B cell (primary cell): ENCODE measurements at regions of chr2 and their contacts with region 1.

Region 1: DNA sequence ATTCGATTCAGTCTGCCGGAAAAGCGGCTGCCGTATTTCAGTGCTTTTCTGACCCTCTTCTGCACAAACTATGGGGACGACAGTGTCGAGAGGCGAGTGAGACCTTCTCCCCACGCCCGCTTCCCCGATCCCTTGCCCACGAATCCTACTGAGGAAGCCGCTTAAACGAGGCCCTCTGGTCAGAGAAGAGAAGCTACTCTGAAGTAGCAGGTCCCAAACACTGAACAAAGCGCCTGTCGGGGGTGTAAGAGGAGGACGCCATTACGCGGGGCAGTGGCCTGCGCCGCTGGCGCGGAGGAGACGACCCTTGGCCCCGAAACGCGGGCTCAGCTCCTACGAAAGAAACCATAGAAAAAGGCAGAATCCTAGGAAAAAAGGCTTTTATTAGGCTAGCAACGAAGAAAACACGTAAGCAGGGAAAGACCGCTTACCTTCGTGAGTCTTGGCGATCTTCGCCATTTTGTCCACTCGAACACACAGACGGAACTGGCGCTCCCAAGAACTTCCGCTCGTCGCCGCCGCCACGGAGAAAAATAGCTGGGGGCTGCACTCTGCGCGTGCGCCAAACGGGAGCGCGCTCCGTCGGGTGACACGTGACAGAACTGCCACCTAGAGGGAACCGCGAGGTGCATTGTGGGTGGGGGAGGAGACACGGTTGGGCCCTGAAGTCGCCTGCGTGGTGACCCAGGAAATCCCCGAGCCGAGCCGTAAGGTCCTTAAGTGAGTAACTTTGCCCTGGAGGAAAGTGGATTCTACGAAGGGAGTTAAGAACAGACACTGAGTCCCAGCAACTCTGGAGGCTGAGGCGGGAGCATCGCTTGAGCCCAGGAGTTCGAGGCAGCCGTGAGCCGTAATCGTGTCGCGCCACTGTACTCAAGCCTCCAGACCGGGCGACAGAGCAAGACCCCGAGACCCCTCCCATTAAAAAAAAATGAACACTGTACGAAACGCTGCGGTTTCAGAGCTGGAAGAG is at the start of gene SF3B1:
- DNase-seq: peak; percentile 99
- ATAC-seq: peak; percentile 96
- H3K4me3 ChIP-seq: peak within 1 kb of the TSS; percentile 95 to 100 (median 99)
- H3K4me3 Mint-ChIP-seq: peak within 1 kb of the TSS; percentile 99
- H3K27ac ChIP-seq: peak within 1 kb of the TSS; percentile 95 to 98
- H3K27ac Mint-ChIP-seq: peak within 1 kb of the TSS; percentile 100
- H3K4me1 ChIP-seq: peaks cover 41 to 45% of the 10 kb centered on the region in 2 donors
- H3K4me1 Mint-ChIP-seq: peaks cover 52% of the 10 kb centered on the region
- H3K27me3 ChIP-seq: no peaks in the 10 kb centered on the region
- H3K27me3 Mint-ChIP-seq: no peaks in the 10 kb centered on the region
- CTCF ChIP-seq: no peak
- total RNA-seq, gene SF3B1: 523 and 524 TPM in 2 replicates

Region 2: GRCh38 chr2:196639180-196640030 is 795.4 kb before region 1 on chr2 and contains the start of gene CCDC150:
- CTCF ChIA-PET with region 1: no interaction called
- POLR2A ChIA-PET with region 1: no interaction called
- intact Hi-C with region 1: loop called (anchors 5 kb)
- DNase-seq: peak; percentile 94
- ATAC-seq: peak; percentile 100
- H3K4me3 ChIP-seq: peak within 1 kb of the TSS; percentile 54 to 88 (median 68)
- H3K4me3 Mint-ChIP-seq: peak within 1 kb of the TSS; percentile 94
- H3K27ac ChIP-seq: peak within 1 kb of the TSS in 1 of 2 donors; percentile 56
- H3K27ac Mint-ChIP-seq: peak within 1 kb of the TSS; percentile 70
- H3K4me1 ChIP-seq: peaks cover 7 to 17% of the 10 kb centered on the region in 2 donors
- H3K4me1 Mint-ChIP-seq: peaks cover 21% of the 10 kb centered on the region
- H3K27me3 ChIP-seq: no peaks in the 10 kb centered on the region
- H3K27me3 Mint-ChIP-seq: peaks cover 8% of the 10 kb centered on the region
- CTCF ChIP-seq: no peak
- total RNA-seq, gene CCDC150: 4.9 and 5.0 TPM in 2 replicates

Region 3: DNA sequence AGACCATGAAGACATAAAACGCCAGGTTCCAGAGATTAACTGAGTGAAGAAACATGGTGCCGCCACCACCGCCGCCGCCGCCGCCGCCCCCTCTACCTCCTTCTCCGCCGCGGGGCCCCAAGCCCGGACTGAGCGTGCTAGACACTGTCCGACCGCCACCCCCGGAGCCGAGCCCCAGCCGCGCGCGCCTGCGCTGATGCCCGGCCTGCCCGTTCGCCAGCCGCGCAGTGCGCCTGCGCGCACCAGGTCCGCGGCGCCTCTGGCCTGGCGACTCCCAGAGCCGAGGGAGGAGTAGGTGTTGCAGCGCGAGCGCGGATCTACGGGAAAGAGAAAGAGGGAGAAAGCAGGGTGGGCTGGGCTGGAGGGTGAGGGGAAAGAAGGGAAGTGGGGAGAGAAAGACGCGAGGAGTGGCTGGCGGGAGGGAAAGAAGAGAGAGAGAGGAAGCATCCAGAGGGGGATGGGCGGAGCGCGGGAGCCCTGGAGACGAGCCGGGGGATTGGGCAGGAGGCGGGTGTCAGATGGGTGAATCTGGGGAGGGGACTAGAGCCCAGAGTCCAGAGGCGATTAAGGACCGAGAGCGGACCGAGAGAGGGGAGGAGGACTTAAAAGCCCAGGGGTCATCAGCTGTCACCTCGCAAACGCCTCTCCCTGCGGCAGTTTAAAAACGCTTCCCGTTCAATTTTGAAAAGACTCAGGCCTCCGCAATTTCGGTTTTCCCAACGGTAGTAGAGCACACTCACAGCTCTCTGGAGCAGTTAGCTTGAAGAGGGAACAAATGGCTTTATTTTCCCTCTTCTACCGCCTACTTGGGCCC is 508.1 kb before region 1 on chr2 and contains the start of gene PGAP1:
- CTCF ChIA-PET with region 1: no interaction called
- POLR2A ChIA-PET with region 1: no interaction called
- intact Hi-C with region 1: loop called (anchors 5 kb)
- DNase-seq: peak; percentile 88
- ATAC-seq: peak; percentile 91
- H3K4me3 ChIP-seq: peak within 1 kb of the TSS; percentile 76 to 89 (median 86)
- H3K4me3 Mint-ChIP-seq: peak within 1 kb of the TSS; percentile 90
- H3K27ac ChIP-seq: peak within 1 kb of the TSS; percentile 4 to 45
- H3K27ac Mint-ChIP-seq: peak within 1 kb of the TSS; percentile 73
- H3K4me1 ChIP-seq: peaks cover 10 to 14% of the 10 kb centered on the region in 2 donors
- H3K4me1 Mint-ChIP-seq: peaks cover 20% of the 10 kb centered on the region
- H3K27me3 ChIP-seq: peaks cover 0 to 8% (median 3%) of the 10 kb centered on the region in 4 experiments
- H3K27me3 Mint-ChIP-seq: peaks cover 16% of the 10 kb centered on the region
- CTCF ChIP-seq: no peak
- total RNA-seq, gene PGAP1: 21.8 and 22.9 TPM in 2 replicates

Region 4: DNA sequence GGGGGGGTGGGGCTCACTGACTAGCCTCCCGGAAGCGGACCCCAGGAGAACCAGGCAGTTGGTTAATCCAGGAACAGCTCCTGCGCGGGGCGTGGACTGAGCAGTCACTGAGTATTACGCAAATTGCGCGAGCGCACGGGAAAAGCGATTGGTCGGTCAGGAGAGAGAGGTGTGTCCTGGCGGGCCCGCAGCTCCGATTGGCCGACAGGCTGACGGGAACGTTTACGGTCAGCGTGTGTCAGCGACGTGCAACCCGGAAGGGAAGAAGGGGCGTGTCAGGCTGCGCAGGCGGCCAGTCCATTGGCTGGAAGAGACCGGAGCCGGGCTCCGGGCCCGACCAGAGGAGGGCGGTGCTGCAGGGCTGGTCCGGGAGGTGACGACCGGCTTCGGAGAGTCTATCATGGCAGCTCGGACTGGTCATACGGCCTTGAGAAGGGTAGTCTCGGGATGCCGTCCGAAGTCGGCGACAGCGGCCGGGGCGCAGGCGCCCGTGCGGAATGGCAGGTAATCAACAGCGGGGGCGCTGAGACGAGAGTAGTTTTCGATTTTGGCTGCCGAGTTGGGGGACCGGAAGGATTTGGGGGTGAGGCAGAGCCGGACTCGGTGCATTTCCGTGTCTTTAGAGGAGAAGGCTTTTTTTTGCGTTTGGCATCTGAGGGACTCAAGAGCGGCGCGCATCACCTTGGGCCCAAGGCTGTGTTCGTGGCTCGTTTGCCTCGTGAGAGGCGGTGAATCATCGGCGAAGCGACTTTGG is 18.5 kb after region 1 on chr2 and contains the start of gene COQ10B:
- CTCF ChIA-PET with region 1: interaction called, 6 read pairs
- POLR2A ChIA-PET with region 1: interaction called, 27 read pairs
- intact Hi-C with region 1: loop called (anchors 1 kb)
- DNase-seq: peak; percentile 99
- ATAC-seq: peak; percentile 90
- H3K4me3 ChIP-seq: peak within 1 kb of the TSS; percentile 82 to 99 (median 89)
- H3K4me3 Mint-ChIP-seq: peak within 1 kb of the TSS; percentile 99
- H3K27ac ChIP-seq: peak within 1 kb of the TSS; percentile 95 to 96
- H3K27ac Mint-ChIP-seq: peak within 1 kb of the TSS; percentile 99
- H3K4me1 ChIP-seq: peaks cover 17 to 19% of the 10 kb centered on the region in 2 donors
- H3K4me1 Mint-ChIP-seq: peaks cover 42% of the 10 kb centered on the region
- H3K27me3 ChIP-seq: no peaks in the 10 kb centered on the region
- H3K27me3 Mint-ChIP-seq: no peaks in the 10 kb centered on the region
- CTCF ChIP-seq: no peak
- total RNA-seq, gene COQ10B: 29.1 and 29.6 TPM in 2 replicates

Region 5: GRCh38 chr2:197499594-197500526 is 65.0 kb after region 1 on chr2 and contains the starts of genes HSPD1 and HSPE1:
- CTCF ChIA-PET with region 1: no interaction called
- POLR2A ChIA-PET with region 1: interaction called, 15 read pairs
- intact Hi-C with region 1: loop called (anchors 1 kb)
- DNase-seq: peak; percentile 100
- ATAC-seq: peak; percentile 84
- H3K4me3 ChIP-seq: peak within 1 kb of the TSS; percentile 60 to 86 (median 76)
- H3K4me3 Mint-ChIP-seq: peak within 1 kb of the TSS; percentile 98
- H3K27ac ChIP-seq: peak within 1 kb of the TSS; percentile 85 to 90
- H3K27ac Mint-ChIP-seq: peak within 1 kb of the TSS; percentile 94
- H3K4me1 ChIP-seq: peaks cover 37 to 38% of the 10 kb centered on the region in 2 donors
- H3K4me1 Mint-ChIP-seq: peaks cover 53% of the 10 kb centered on the region
- H3K27me3 ChIP-seq: no peaks in the 10 kb centered on the region
- H3K27me3 Mint-ChIP-seq: no peaks in the 10 kb centered on the region
- CTCF ChIP-seq: no peak
- total RNA-seq, gene HSPD1: 112 and 120 TPM in 2 replicates
- total RNA-seq, gene HSPE1: 37.9 and 46.2 TPM in 2 replicates

Region 6: DNA sequence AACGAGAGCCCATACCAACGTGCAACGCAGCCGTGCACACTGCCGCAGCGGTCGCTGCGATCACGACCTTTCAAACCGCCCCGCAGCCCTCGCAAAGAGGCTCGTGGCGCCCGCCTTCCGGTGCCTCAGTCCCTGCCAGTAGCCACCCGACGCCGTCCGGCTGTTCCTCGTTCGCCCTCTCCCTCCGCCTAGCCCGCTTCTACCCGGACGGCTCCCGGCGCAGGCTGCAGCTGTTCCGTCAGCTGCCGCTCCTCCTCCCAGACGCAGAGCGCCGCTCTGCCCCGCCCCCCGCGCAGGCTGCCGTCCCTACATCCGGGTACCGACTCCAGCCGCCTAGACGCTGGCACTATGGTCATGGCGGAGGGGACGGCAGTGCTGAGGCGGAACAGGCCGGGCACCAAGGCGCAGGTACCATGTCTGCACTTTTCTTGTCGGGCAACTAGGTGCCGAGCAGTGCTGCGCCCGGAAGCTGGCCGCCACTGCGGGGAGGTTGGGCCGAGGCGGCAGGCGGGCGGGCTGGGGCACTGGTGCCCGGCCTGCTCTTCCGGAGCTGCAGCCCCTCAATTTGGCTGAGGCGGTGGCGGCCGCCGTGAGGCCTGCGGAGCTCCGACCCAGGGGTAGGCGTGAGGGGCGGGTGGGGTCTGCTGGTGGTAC is 81.0 kb after region 1 on chr2 and contains the start of gene MOB4:
- CTCF ChIA-PET with region 1: interaction called, 4 read pairs
- POLR2A ChIA-PET with region 1: interaction called, 5 read pairs
- intact Hi-C with region 1: loop called (anchors 1 kb)
- DNase-seq: peak; percentile 98
- ATAC-seq: peak; percentile 95
- H3K4me3 ChIP-seq: peak within 1 kb of the TSS; percentile 79 to 90 (median 85)
- H3K4me3 Mint-ChIP-seq: peak within 1 kb of the TSS; percentile 97
- H3K27ac ChIP-seq: peak within 1 kb of the TSS; percentile 92 to 96
- H3K27ac Mint-ChIP-seq: peak within 1 kb of the TSS; percentile 91
- H3K4me1 ChIP-seq: peaks cover 10 to 17% of the 10 kb centered on the region in 2 donors
- H3K4me1 Mint-ChIP-seq: peaks cover 41% of the 10 kb centered on the region
- H3K27me3 ChIP-seq: no peaks in the 10 kb centered on the region
- H3K27me3 Mint-ChIP-seq: no peaks in the 10 kb centered on the region
- CTCF ChIP-seq: no peak
- total RNA-seq, gene MOB4: 20.1 and 20.8 TPM in 2 replicates

Region 7: DNA sequence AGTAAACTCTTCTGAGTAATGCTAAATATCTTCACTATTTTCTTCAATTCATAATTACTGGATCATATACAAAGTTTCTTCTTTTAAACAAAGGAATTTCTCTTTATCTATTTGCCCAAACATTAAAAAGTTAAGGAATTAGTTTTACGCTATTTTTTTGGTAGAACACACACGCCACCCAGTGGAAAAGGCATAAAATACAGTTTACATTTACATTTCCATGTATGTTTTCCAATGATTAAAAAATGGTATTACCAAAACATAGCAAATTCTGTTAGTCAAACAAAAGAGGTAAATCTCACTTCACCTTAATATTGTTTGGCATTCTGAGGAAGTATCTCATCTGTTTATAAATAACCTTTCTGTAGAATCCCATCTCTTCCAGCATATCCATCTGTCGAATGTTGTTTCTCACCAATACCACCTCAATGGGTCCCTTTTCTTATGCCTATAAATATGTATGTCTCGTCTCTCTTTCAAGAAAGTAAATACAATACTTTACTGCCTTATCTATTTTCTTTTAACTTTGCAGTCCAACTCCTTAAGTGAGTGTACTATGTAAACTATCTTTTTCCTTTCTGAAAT is 343.1 kb after region 1 on chr2:
- CTCF ChIA-PET with region 1: no interaction called
- POLR2A ChIA-PET with region 1: no interaction called
- intact Hi-C with region 1: loop called (anchors 5 kb)
- DNase-seq: peak; percentile 46
- ATAC-seq: no peak
- H3K4me3 ChIP-seq: no peak overlapping the region
- H3K4me3 Mint-ChIP-seq: no peak overlapping the region
- H3K27ac ChIP-seq: no peak overlapping the region
- H3K27ac Mint-ChIP-seq: no peak overlapping the region
- H3K4me1 ChIP-seq: no peaks in the 10 kb centered on the region
- H3K4me1 Mint-ChIP-seq: no peaks in the 10 kb centered on the region
- H3K27me3 ChIP-seq: peaks cover 0 to 8% (median 0%) of the 10 kb centered on the region in 4 experiments
- H3K27me3 Mint-ChIP-seq: peaks cover 20% of the 10 kb centered on the region
- CTCF ChIP-seq: peak; percentile 89